Heart left ventricle (tissue), 16 donors: ENCODE measurements at regions of chr4 and their contacts with region 1.

Region 1: GRCh38 chr4:62709618-62710252 is 1509.6 kb downstream of the ADGRL3 start:
- DNase-seq: no peak
- ATAC-seq: peak in 3 of 4 donors; percentile 64 to 72 (median 69)
- H3K4me3 ChIP-seq: peak overlapping the region in 8 of 12 donors; percentile 23 to 51 (median 30)
- H3K27ac ChIP-seq: no peak overlapping the region
- H3K4me1 ChIP-seq: peaks cover 0 to 3% (median 0%) of the 10 kb centered on the region in 12 donors
- H3K27me3 ChIP-seq: no peaks in the 10 kb centered on the region
- CTCF ChIP-seq: peak; percentile 36 to 67 (median 52)
- POLR2A ChIP-seq: no peak

Region 2: GRCh38 chr4:61741327-61742096 is 968.2 kb before region 1 on chr4:
- intact Hi-C with region 1: loop called in 1 of 10 experiments (anchors 5 kb)
- DNase-seq: peak in 4 of 5 donors; percentile 21 to 59 (median 32)
- ATAC-seq: peak; percentile 61 to 95 (median 86)
- H3K4me3 ChIP-seq: peak overlapping the region in 5 of 12 donors; percentile 1 to 26 (median 12)
- H3K27ac ChIP-seq: peak overlapping the region in 9 of 12 donors; percentile 9 to 69 (median 26)
- H3K4me1 ChIP-seq: peaks cover 0 to 13% (median 0%) of the 10 kb centered on the region in 12 donors
- H3K27me3 ChIP-seq: no peaks in the 10 kb centered on the region
- CTCF ChIP-seq: peak in 10 of 12 donors; percentile 15 to 50 (median 39)
- POLR2A ChIP-seq: no peak

Region 3: DNA sequence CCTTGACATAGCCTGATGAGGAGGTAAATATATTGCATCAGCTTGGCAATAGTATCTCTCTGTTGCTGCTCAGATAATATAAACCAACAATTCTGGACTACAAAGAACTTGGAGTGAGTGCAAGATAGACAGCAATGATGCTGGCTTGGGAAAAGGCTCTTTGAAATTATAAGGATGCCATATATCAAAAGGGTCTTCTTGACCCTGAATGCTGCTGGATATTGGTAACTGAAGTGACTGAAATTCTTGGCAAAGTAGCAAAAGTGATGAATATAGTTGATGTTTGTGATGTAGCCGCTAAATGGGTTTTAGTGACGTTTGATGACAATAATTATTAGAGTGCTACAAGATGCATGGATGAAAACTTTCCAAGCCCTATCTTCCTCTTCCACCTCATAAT is 118.0 kb before region 1 on chr4:
- intact Hi-C with region 1: loop called in 4 of 10 experiments (anchors 5 to 10 kb)
- DNase-seq: no peak
- ATAC-seq: no peak
- H3K4me3 ChIP-seq: no peak overlapping the region
- H3K27ac ChIP-seq: no peak overlapping the region
- H3K4me1 ChIP-seq: peaks cover 0 to 16% (median 0%) of the 10 kb centered on the region in 12 donors
- H3K27me3 ChIP-seq: no peaks in the 10 kb centered on the region
- CTCF ChIP-seq: no peak
- POLR2A ChIP-seq: no peak

Region 4: DNA sequence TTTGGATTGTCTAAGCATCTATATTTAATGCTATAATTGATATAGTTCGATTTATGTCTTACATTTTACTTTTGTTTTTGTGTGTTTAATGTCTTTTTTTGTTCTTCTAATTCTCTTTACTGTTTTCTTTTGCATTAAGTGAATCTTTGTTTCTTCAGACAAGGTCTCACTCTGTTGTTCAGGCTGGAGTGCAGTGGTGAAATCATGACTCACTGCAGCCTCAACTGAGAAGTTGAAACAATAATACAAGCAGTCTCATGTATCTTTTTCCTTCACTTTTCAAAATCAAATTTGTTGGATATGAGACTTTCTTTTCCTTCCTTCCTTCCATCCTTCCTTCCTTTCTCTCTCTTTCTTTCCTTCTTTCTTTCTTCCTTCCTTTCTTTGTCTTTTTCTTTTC is 108.0 kb before region 1 on chr4:
- intact Hi-C with region 1: loop called in 3 of 10 experiments (anchors 5 to 10 kb)
- DNase-seq: no peak
- ATAC-seq: no peak
- H3K4me3 ChIP-seq: no peak overlapping the region
- H3K27ac ChIP-seq: no peak overlapping the region
- H3K4me1 ChIP-seq: no peaks in the 10 kb centered on the region
- H3K27me3 ChIP-seq: no peaks in the 10 kb centered on the region
- CTCF ChIP-seq: no peak
- POLR2A ChIP-seq: no peak

Region 5: GRCh38 chr4:62917649-62918048 is 207.9 kb after region 1 on chr4:
- intact Hi-C with region 1: no loop called
- DNase-seq: no peak
- ATAC-seq: peak; percentile 70 to 98 (median 84)
- H3K4me3 ChIP-seq: no peak overlapping the region
- H3K27ac ChIP-seq: no peak overlapping the region
- H3K4me1 ChIP-seq: no peaks in the 10 kb centered on the region
- H3K27me3 ChIP-seq: no peaks in the 10 kb centered on the region
- CTCF ChIP-seq: no peak
- POLR2A ChIP-seq: no peak